Activated CD4-positive, alpha-beta T cell treated with anti-CD3 and anti-CD28 coated beads, Interleukin-2, amount 10 ng/mL, durations not matched to agents 7 days and 5 days (primary cell): ENCODE measurements at regions of chr10 and their contacts with region 1.

Region 1: GRCh38 chr10:97407211-97407951 is 6.2 kb upstream of the RRP12 start:
- DNase-seq: peak; percentile 78
- H3K4me3 Mint-ChIP-seq: peak overlapping the region; percentile 48
- H3K27ac Mint-ChIP-seq: peak overlapping the region; percentile 81
- H3K4me1 Mint-ChIP-seq: peaks cover 11% of the 10 kb centered on the region
- H3K27me3 Mint-ChIP-seq: no peaks in the 10 kb centered on the region

Region 2: GRCh38 chr10:97388152-97388551 is 19.2 kb before region 1 on chr10:
- CTCF ChIA-PET with region 1: no interaction called
- POLR2A ChIA-PET with region 1: no interaction called
- DNase-seq: no peak
- H3K4me3 Mint-ChIP-seq: no peak overlapping the region
- H3K27ac Mint-ChIP-seq: no peak overlapping the region
- H3K4me1 Mint-ChIP-seq: peaks cover 2% of the 10 kb centered on the region
- H3K27me3 Mint-ChIP-seq: no peaks in the 10 kb centered on the region

Region 3: GRCh38 chr10:97425964-97426775 is 18.8 kb after region 1 on chr10 and contains the start of gene PGAM1:
- CTCF ChIA-PET with region 1: interaction called, 16 read pairs
- POLR2A ChIA-PET with region 1: interaction called, 5 read pairs
- DNase-seq: peak; percentile 95
- H3K4me3 Mint-ChIP-seq: peak within 1 kb of the TSS; percentile 92
- H3K27ac Mint-ChIP-seq: peak within 1 kb of the TSS; percentile 96
- H3K4me1 Mint-ChIP-seq: peaks cover 48% of the 10 kb centered on the region
- H3K27me3 Mint-ChIP-seq: no peaks in the 10 kb centered on the region
- total RNA-seq, gene PGAM1: 380 to 406 TPM